ENCODE measurements at regions of chr4 and their contacts with region 1.

Region 1: GRCh38 chr4:109826719-109827118 is 1.1 kb upstream of the RRH start:
- DNase-seq: no peak
- ATAC-seq: peak; percentile 66
- H3K4me3 ChIP-seq: no peak overlapping the region
- H3K27ac ChIP-seq: no peak overlapping the region
- H3K4me1 ChIP-seq: no peaks in the 10 kb centered on the region
- H3K27me3 ChIP-seq: no peaks in the 10 kb centered on the region
- CTCF ChIP-seq: peak; percentile 35 to 42

Region 2: DNA sequence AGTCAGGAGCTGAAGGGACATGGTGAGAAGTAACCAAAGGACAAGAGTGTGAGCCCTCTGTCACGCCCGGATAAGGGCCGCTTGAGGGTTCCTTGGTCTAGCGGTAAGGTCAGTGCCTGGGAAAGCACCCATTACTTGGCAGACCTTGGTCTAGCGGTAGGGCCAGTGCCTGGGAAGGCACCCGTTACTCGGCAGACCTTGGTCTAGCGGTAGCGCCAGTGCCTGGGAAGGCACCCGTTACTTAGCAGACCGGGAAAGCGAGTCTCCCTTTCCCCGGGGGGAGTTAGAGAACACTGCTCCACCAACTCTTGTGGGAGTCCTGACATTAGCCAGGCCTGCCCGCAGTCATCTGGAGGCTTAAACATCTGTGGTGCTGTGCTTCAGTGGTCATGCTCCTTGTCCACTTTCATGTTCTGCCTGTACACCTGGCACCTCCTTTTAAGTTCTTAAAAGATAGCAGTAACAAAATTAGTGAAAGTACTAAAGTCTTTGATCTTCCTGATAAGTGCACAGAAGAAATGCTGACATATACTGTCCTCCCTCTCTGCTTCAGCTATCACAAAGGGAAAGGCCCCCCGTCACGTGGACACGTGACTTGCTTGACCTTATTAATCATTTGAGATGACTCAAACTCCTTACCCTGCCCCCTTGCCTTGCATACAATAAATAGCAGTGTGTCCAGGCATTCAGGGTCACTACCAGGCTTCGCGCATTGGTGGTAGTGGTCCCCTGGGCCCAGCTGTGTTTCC is 402.5 kb before region 1 on chr4:
- intact Hi-C with region 1: loop called in 1 of 2 experiments (anchors 5 kb)
- DNase-seq: no peak
- ATAC-seq: no peak
- H3K4me3 ChIP-seq: no peak overlapping the region
- H3K27ac ChIP-seq: no peak overlapping the region
- H3K4me1 ChIP-seq: peaks cover 0 to 4% of the 10 kb centered on the region in 2 donors
- H3K27me3 ChIP-seq: no peaks in the 10 kb centered on the region
- CTCF ChIP-seq: no peak